ENCODE measurements at regions of chr1 and their contacts with region 1.

Region 1: DNA sequence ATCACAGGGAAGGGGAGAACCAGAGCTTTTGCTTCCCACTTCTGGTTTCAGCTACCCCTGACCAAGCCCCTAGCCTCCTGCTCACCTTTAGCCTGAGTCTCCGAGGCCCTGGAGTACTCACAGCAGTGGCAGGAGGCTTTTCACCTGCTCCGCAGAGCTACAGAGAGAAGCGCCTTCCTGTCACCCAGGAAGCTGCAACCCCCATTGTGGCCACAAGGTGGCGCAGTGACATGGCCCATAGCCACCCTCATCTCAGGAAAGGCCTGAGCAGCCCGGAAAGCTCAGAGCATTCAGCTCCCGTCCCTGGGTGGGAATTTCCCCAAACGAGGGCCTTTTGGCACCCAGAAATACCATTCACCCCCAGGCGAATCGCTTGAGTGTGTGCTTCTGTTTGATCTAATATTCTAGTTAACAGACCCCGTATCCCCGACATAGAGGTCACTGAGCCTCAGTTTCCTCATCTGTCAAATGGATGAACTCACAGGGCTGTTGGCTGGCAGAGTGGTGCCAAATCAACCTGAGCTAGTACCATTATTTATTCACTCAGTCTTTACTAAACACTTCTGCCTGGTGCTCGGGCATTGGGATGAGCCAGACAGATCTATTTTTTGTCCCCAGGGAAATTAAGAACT is 25.3 kb downstream of the A3GALT2 start:
- DNase-seq: peak; percentile 92
- ATAC-seq: peak; percentile 94
- H3K4me3 ChIP-seq: no peak overlapping the region
- H3K27ac ChIP-seq: peak overlapping the region; percentile 18
- H3K4me1 ChIP-seq: peaks cover 18% of the 10 kb centered on the region
- H3K27me3 ChIP-seq: no peaks in the 10 kb centered on the region
- CTCF ChIP-seq: peak; percentile 100

Region 2: DNA sequence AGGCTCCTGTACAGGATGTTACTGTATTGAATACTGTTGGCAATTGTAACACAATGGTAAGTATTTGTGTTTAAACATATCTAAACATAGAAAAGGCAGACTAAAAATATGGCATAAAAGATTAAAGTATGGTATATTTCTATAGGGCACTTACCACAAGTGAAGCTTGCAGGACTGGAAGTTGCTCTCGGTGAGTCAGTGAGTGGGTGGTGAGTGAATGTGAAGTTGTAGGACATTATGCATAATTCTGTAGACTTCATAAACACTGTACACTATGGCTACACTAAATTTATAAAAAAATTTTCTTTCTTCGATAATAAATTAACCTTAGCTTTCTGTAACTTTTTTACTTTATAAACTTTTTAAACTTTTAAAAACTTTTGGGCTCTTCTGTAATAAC is 100.0 kb before region 1 on chr1:
- intact Hi-C with region 1: no loop called
- DNase-seq: no peak
- ATAC-seq: no peak
- H3K4me3 ChIP-seq: no peak overlapping the region
- H3K27ac ChIP-seq: no peak overlapping the region
- H3K4me1 ChIP-seq: no peaks in the 10 kb centered on the region
- H3K27me3 ChIP-seq: no peaks in the 10 kb centered on the region
- CTCF ChIP-seq: no peak

Region 3: DNA sequence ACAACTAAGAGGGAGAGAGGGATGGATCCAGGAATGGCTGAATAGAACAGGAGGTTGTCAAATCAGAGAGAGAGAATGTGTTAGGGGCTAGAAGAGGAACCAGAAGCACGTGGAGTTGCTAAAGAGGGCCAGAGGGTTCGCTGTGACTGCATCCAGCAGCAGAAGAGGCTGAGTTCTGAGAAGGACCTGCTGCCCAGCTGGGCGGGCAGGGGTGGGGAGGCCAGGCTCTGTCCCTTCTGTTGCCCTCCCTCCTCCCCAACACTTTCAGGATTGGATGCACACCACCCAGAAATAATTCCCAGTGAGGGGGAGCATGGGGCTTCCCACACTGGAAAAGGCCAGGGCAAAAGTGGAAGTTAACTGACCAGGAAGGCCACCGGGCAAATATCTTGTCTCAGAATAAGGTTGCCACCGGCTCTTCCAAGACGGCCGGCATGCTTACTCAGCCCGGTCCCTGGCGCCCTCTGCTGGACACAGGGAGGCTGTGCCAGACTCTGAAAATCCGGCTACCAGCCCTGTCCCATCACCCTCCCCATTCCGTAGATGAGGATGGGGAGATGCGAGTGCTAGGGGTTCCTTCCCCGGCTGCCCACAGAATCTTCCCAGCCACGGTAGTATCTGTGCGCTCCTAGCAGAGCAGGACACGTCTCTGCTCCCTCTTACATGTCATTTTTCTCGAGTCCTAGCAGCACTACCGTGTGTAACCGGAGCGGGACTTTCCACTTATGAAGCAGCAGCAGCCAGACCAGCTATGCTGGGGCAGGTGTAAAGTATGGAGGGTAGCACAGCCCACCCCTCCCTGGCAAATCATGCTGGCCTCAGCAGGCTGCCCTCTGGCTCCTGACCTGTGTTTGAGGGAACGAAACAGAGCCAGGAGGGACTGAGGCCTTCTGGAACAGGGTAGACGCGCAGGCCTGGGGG is 72.2 kb after region 1 on chr1:
- intact Hi-C with region 1: loop called (anchors 5 kb)
- DNase-seq: peak; percentile 93
- ATAC-seq: peak; percentile 91
- H3K4me3 ChIP-seq: no peak overlapping the region
- H3K27ac ChIP-seq: no peak overlapping the region
- H3K4me1 ChIP-seq: peaks cover 24% of the 10 kb centered on the region
- H3K27me3 ChIP-seq: no peaks in the 10 kb centered on the region
- CTCF ChIP-seq: peak; percentile 99

Region 4: DNA sequence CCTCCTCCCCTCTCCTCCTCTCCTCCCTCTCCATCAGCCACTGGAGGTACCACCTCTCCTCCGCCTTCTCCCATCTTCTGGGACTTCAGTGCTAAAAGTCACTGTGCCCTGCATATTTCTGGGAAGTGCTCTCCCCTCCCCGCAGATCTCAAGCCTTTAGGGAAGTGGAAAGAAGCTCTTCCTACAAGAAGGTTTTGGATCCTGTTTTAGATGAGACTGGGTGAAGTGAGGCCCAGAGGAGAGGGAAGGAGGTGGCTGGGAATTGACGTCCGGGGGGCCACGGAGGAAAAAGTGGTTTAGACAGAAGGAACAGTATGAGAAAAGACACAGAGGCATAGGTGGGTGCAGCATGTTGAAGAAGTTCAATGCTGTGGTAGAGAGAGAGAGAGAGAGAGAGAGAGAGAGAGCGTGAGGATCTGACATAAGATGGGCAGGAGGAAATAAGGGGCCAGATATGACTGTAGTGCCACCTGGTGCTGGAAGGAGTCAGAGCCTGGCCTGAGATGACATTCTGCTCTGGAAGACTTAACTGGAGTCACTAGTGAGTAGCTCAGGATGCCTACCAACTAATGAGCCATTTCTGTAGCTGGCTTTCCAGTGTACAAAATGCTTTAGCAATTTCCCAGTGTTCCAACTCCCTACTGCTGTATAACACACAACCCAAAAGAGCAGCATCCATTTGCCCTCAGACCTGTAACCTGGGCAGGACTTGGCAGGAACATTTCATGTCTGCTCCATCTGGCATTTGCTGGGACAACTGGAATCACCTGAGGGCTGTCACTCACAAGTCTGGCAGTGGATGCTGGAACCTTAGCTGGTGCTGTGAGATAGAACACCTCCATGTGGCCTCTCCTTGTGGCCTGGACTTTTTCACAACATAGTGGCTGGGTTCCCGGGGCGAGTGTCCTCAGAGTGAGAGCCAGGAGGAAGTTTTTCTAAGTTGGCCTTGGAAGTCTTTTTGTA is 160.3 kb after region 1 on chr1:
- intact Hi-C with region 1: loop called (anchors 10 kb)
- DNase-seq: peak; percentile 53
- ATAC-seq: peak; percentile 93
- H3K4me3 ChIP-seq: no peak overlapping the region
- H3K27ac ChIP-seq: no peak overlapping the region
- H3K4me1 ChIP-seq: no peaks in the 10 kb centered on the region
- H3K27me3 ChIP-seq: no peaks in the 10 kb centered on the region
- CTCF ChIP-seq: peak; percentile 50

Measured in upper lobe of right lung (tissue), 1 donor.